ENCODE measurements at regions of chr2 and their contacts with region 1.

Region 1: GRCh38 chr2:11743846-11744553 is 2.4 kb upstream of the LPIN1 start:
- DNase-seq: peak; percentile 100
- H3K4me3 ChIP-seq: peak overlapping the region; percentile 6 to 24 (median 12)
- H3K27ac ChIP-seq: peak overlapping the region; percentile 75
- H3K4me1 ChIP-seq: peaks cover 56% of the 10 kb centered on the region
- H3K27me3 ChIP-seq: no peaks in the 10 kb centered on the region
- CTCF ChIP-seq: no peak

Region 2: GRCh38 chr2:11688222-11689069 is 55.6 kb before region 1 on chr2:
- CTCF ChIA-PET with region 1: interaction called, 9 read pairs
- dilution Hi-C with region 1: no loop called
- in situ Hi-C with region 1: no loop called
- intact Hi-C with region 1: loop called (anchors 1 kb)
- DNase-seq: peak; percentile 65
- H3K4me3 ChIP-seq: peak overlapping the region; percentile 13 to 27 (median 23)
- H3K27ac ChIP-seq: no peak overlapping the region
- H3K4me1 ChIP-seq: peaks cover 14% of the 10 kb centered on the region
- H3K27me3 ChIP-seq: peaks cover 3% of the 10 kb centered on the region
- CTCF ChIP-seq: peak; percentile 82 to 90

Region 3: GRCh38 chr2:11710234-11710975 is 33.6 kb before region 1 on chr2:
- CTCF ChIA-PET with region 1: no interaction called
- dilution Hi-C with region 1: no loop called
- in situ Hi-C with region 1: no loop called
- intact Hi-C with region 1: loop called (anchors 2 kb)
- DNase-seq: peak; percentile 80
- H3K4me3 ChIP-seq: no peak overlapping the region
- H3K27ac ChIP-seq: no peak overlapping the region
- H3K4me1 ChIP-seq: peaks cover 22% of the 10 kb centered on the region
- H3K27me3 ChIP-seq: no peaks in the 10 kb centered on the region
- CTCF ChIP-seq: no peak

Region 4: GRCh38 chr2:11930211-11930761 is 186.3 kb after region 1 on chr2:
- CTCF ChIA-PET with region 1: no interaction called
- dilution Hi-C with region 1: no loop called
- in situ Hi-C with region 1: no loop called
- intact Hi-C with region 1: no loop called
- DNase-seq: no peak
- H3K4me3 ChIP-seq: no peak overlapping the region
- H3K27ac ChIP-seq: no peak overlapping the region
- H3K4me1 ChIP-seq: no peaks in the 10 kb centered on the region
- H3K27me3 ChIP-seq: no peaks in the 10 kb centered on the region
- CTCF ChIP-seq: no peak

Region 5: GRCh38 chr2:12032398-12032797 is 288.4 kb after region 1 on chr2:
- CTCF ChIA-PET with region 1: no interaction called
- dilution Hi-C with region 1: no loop called
- in situ Hi-C with region 1: no loop called
- intact Hi-C with region 1: no loop called
- DNase-seq: no peak
- H3K4me3 ChIP-seq: no peak overlapping the region
- H3K27ac ChIP-seq: no peak overlapping the region
- H3K4me1 ChIP-seq: no peaks in the 10 kb centered on the region
- H3K27me3 ChIP-seq: no peaks in the 10 kb centered on the region
- CTCF ChIP-seq: peak in 1 of 2 donors; percentile 27